Activated naive CD4-positive, alpha-beta T cell treated with anti-CD3 and anti-CD28 coated beads for 36 hours (primary cell): ENCODE measurements at regions of chr2 and their contacts with region 1.

Region 1: GRCh38 chr2:38064801-38065501 is 11.0 kb downstream of the CYP1B1 start:
- DNase-seq: no peak
- H3K4me3 Mint-ChIP-seq: no peak overlapping the region
- H3K27ac Mint-ChIP-seq: no peak overlapping the region
- H3K4me1 Mint-ChIP-seq: no peaks in the 10 kb centered on the region
- H3K27me3 Mint-ChIP-seq: peaks cover 4% of the 10 kb centered on the region

Region 2: GRCh38 chr2:38106405-38107094 is 41.6 kb after region 1 on chr2:
- CTCF ChIA-PET with region 1: no interaction called
- intact Hi-C with region 1: no loop called
- DNase-seq: no peak
- H3K4me3 Mint-ChIP-seq: no peak overlapping the region
- H3K27ac Mint-ChIP-seq: no peak overlapping the region
- H3K4me1 Mint-ChIP-seq: peaks cover 14% of the 10 kb centered on the region
- H3K27me3 Mint-ChIP-seq: peaks cover 29% of the 10 kb centered on the region

Region 3: GRCh38 chr2:39141331-39142271 is 1076.7 kb after region 1 on chr2:
- CTCF ChIA-PET with region 1: no interaction called
- intact Hi-C with region 1: loop called (anchors 10 kb)
- DNase-seq: no peak
- H3K4me3 Mint-ChIP-seq: no peak overlapping the region
- H3K27ac Mint-ChIP-seq: no peak overlapping the region
- H3K4me1 Mint-ChIP-seq: peaks cover 14% of the 10 kb centered on the region
- H3K27me3 Mint-ChIP-seq: no peaks in the 10 kb centered on the region